ENCODE measurements at regions of chr2 and their contacts with region 1.

Region 1: GRCh38 chr2:160269803-160270570 is 69.9 kb upstream of the ITGB6 start:
- DNase-seq: peak; percentile 54
- H3K4me3 ChIP-seq: peak overlapping the region; percentile 52
- CTCF ChIP-seq: peak; percentile 90

Region 2: GRCh38 chr2:160166002-160166401 is 104.0 kb before region 1 on chr2:
- CTCF ChIA-PET with region 1: no interaction called
- POLR2A ChIA-PET with region 1: no interaction called
- DNase-seq: no peak
- H3K4me3 ChIP-seq: no peak overlapping the region
- CTCF ChIP-seq: no peak

Region 3: DNA sequence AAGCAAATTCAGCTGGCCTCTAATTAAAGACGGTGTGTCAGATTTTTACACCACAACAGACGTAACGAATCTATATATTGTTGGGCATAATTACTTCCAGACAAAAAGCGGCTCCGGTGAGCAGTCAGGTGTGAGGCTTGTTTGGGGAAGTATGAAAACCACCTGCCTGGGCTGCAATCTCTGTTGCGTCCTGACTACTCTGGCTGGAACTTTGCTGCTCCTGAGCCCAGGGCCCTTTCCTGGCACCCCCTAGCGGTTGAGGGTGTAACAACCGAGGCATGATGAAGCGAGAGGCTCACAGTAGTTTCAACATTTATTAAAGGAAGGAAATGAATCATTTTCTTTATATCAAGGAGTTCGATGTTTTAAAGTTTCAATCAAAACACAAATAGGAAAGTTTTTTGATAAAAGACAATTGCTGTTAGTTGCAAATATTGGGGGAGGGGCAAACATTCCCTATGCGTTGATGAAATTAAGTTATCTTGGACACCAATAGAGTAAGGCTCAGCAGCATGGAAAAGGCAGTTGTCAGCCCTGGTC is 59.3 kb before region 1 on chr2:
- CTCF ChIA-PET with region 1: interaction called, 10 read pairs
- POLR2A ChIA-PET with region 1: interaction called, 6 read pairs
- DNase-seq: no peak
- H3K4me3 ChIP-seq: no peak overlapping the region
- CTCF ChIP-seq: peak; percentile 79

Region 4: DNA sequence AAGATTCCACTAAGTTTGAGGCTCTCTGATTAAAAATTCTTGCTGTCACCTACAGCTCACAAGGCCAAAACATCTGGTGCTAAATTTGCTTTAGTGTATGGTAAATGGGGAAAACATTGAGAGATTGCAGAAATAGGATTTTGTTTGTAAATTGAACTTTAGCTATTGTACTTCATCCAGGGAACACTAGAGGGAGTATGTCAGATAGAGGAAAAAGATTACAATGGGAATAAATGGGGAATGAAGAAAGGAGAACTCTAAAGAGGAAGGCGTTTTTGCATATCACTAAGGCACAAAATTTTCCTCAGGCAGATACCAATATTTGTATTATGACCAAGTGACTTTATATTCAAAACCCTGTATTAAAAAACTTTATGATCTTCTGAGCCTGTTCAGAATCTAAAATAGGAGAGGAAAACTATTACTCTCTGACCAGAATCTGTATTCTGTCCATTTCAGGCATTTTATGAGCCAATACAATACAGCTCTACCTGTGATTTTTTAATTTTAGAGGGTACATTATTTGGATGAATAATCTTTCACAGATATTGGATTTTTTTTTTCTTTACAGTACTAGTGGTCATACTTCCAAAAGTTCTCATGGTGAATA is 17.6 kb before region 1 on chr2:
- CTCF ChIA-PET with region 1: interaction called, 32 read pairs
- POLR2A ChIA-PET with region 1: interaction called, 3 read pairs
- DNase-seq: no peak
- H3K4me3 ChIP-seq: no peak overlapping the region
- CTCF ChIP-seq: peak; percentile 58

Region 5: DNA sequence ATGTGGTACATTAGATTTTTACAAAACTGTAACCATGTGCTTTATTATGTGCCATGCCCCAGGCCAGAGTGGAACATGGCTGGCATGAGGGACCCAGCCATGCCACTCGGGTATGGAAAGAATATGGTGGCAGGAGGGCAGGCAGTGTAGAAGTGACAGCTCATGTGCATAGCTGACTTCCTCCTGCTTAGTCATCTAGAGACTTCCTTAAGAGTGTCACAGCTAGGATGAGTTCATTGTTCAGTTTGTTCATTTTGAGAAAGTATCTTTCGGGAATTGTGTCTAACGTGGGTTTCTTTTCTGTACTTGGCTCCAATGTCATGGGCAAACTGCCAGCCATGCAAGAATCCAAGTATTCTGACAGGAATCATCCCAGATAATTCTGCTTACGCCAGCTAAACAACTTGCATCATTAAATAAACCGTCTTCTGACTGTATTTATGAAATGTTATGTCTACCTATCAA is 24.4 kb after region 1 on chr2:
- CTCF ChIA-PET with region 1: interaction called, 19 read pairs
- POLR2A ChIA-PET with region 1: interaction called, 4 read pairs
- DNase-seq: no peak
- H3K4me3 ChIP-seq: no peak overlapping the region
- CTCF ChIP-seq: no peak

Region 6: DNA sequence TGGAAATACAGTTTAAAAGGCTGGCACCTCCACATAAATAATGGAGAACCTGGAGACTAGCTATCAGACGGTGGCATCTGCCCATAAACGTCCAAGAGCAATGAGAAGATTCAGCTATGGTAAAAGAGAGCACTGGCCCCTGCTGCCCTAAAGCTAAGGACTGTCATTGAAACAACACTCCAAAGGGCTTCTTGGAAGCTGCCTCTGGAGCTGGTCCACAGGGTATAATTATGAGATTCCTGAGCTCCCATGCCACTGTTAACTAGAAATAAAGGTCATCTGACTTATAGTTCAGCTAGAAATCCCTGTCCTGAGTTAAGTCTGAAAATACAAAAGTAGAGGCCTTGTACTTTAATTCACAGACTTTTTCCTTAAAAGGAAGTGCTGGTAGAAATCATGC is 263.5 kb after region 1 on chr2:
- CTCF ChIA-PET with region 1: no interaction called
- POLR2A ChIA-PET with region 1: no interaction called
- DNase-seq: no peak
- H3K4me3 ChIP-seq: no peak overlapping the region
- CTCF ChIP-seq: no peak

Region 7: DNA sequence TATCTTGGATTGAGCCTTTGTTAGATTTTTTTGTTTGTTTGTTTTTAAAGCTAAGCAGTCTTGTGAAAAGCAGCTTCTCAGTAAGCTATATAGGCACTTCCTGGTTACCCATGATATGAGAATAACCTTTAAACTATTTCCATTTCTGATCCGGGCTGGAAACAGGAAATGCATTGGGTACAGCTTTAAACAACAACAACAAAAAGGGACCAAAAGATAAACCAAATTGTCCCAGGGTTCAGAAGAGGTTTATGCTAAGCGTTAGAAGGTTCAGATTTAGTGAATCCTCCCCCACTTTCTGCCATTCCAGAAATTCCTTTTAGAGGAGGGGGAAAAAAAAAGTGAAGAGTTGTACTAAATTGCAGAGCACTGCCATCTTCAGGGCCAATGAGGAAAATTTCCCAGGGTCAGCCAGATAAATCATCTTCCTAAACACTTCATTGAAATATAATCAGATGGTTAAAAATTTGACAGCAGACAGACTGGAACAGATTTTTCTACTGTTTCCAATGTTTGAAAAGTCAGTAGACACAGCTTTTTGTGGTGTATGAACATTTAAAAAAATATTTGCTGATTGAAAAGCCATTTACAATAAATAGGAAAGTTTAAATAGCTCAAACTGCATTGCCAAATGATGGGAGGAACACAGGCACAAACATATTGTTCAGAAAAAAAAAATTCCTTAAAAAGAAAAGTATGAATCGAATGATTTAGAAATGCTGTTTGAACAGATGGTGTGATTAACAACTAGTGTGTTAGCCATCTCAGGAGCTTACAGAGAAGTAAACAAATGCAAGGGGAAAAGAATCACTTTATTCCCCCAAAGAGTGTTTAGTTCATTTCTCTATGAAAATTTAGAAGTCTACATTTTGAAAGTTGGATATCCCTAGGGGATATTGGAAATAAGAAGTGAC is 700.3 kb after region 1 on chr2:
- CTCF ChIA-PET with region 1: interaction called, 20 read pairs
- POLR2A ChIA-PET with region 1: interaction called, 4 read pairs
- DNase-seq: no peak
- H3K4me3 ChIP-seq: no peak overlapping the region
- CTCF ChIP-seq: peak; percentile 55